Right ventricle myocardium inferior (tissue), 1 donor: ENCODE measurements at regions of chr10 and their contacts with region 1.

Region 1: DNA sequence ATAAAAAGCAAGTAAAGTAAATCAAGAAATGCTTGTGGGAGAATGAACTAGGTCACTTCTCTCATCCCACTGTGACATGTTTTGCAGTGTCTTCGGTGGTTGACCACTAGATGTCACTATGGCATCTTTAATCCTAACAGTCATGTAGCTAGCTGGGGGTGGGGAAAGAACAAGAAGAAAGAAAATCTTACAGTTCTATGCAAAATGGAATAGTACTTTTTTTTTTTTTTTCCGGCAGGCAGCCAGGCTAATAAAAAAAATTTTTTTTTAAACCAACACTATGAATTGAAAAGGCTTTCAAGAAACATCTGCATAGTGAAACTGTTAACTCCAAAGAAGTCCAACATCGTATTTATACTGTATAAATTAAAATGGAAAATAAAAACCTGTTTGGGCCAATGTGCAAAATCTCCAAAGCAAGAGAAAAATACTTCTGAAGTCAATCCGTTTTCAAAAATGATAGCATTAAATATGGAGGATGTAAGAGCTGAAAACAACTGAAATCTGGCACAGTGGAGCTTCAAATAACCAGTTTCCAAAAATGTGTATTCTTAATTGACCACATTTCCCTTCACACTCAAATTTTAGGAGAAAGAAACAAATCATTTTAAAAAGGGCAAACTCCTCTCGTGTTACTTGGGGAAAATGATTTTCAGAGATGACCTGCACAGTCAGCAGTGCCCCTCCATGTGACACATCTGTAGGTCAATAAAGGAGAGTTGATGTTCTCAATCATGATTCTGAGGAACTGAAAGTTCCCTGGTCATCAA is 38.5 kb downstream of the CDK1 start:
- DNase-seq: no peak
- ATAC-seq: peak; percentile 94

Region 2: DNA sequence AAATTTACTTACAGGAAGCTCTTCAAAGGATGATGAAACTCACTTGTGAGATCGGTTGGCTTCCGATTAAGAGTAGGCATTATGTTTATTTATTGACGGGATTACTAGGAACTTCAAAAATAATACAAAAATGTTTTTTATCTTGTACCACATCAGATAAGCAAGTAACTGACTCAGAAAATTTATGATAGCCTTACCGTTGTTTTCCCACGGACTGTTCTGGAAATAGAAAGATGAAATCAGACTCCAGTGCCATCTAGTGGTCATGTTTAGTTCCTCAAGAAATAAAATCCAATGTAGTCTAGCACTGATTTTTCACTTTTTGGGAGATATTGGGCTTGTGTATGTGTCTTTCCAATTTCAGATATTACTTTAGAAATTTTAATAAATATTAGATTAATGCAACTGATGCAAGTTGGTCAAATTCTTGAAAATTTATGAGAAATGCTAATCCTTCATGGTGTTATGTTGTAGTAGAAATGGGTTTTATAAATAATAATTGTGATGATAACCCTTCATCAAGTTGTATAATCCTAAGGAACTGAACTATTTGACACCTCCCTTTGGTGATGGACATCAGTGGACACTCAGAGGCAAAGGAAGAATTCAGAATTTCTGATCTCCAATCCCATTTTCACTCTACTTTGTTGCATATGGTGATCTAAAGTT is 467.5 kb after region 1 on chr10:
- intact Hi-C with region 1: loop called (anchors 5 kb)
- DNase-seq: no peak
- ATAC-seq: no peak